Adrenal gland (tissue), 19 donors: ENCODE measurements at regions of chr3 and their contacts with region 1.

Region 1: GRCh38 chr3:142993958-142994442 is 7.4 kb upstream of the U2SURP start:
- DNase-seq: peak; percentile 54 to 83 (median 69)
- H3K4me3 ChIP-seq: no peak overlapping the region
- H3K27ac ChIP-seq: no peak overlapping the region
- H3K4me1 ChIP-seq: no peaks in the 10 kb centered on the region
- H3K27me3 ChIP-seq: no peaks in the 10 kb centered on the region
- CTCF ChIP-seq: peak; percentile 52 to 77 (median 68)
- POLR2A ChIP-seq: no peak

Region 2: GRCh38 chr3:142586803-142587406 is 407.1 kb before region 1 on chr3:
- intact Hi-C with region 1: loop called (anchors 5 to 10 kb)
- DNase-seq: peak in 6 of 7 donors; percentile 25 to 65 (median 42)
- H3K4me3 ChIP-seq: no peak overlapping the region
- H3K27ac ChIP-seq: no peak overlapping the region
- H3K4me1 ChIP-seq: no peaks in the 10 kb centered on the region
- H3K27me3 ChIP-seq: no peaks in the 10 kb centered on the region
- CTCF ChIP-seq: peak; percentile 38 to 72 (median 67)
- POLR2A ChIP-seq: no peak

Region 3: GRCh38 chr3:142828703-142829305 is 165.2 kb before region 1 on chr3:
- intact Hi-C with region 1: loop called (anchors 5 kb)
- DNase-seq: peak; percentile 73 to 94 (median 87)
- H3K4me3 ChIP-seq: no peak overlapping the region
- H3K27ac ChIP-seq: no peak overlapping the region
- H3K4me1 ChIP-seq: no peaks in the 10 kb centered on the region
- H3K27me3 ChIP-seq: no peaks in the 10 kb centered on the region
- CTCF ChIP-seq: peak; percentile 78 to 91 (median 87)
- POLR2A ChIP-seq: no peak

Region 4: GRCh38 chr3:142931222-142931621 is 62.8 kb before region 1 on chr3:
- intact Hi-C with region 1: loop called (anchors 5 to 10 kb)
- DNase-seq: no peak
- H3K4me3 ChIP-seq: no peak overlapping the region
- H3K27ac ChIP-seq: no peak overlapping the region
- H3K4me1 ChIP-seq: no peaks in the 10 kb centered on the region
- H3K27me3 ChIP-seq: no peaks in the 10 kb centered on the region
- CTCF ChIP-seq: no peak
- POLR2A ChIP-seq: no peak

Region 5: GRCh38 chr3:142947799-142948575 is 46.0 kb before region 1 on chr3:
- intact Hi-C with region 1: no loop called
- DNase-seq: peak in 5 of 7 donors; percentile 26 to 46 (median 40)
- H3K4me3 ChIP-seq: no peak overlapping the region
- H3K27ac ChIP-seq: no peak overlapping the region
- H3K4me1 ChIP-seq: no peaks in the 10 kb centered on the region
- H3K27me3 ChIP-seq: no peaks in the 10 kb centered on the region
- CTCF ChIP-seq: no peak
- POLR2A ChIP-seq: no peak